Activated T-helper 2 cell treated with anti-CD3 and anti-CD28 coated beads, Interferon-gamma antibody, Interleukin-2, Interleukin-4, amounts not matched to agents 10 μg/mL and 5 μg/mL and 100 μg/mL, durations not matched to agents 14 hours and 24 hours and 36 hours (primary cell): ENCODE measurements at regions of chr21 and their contacts with region 1.

Region 1: DNA sequence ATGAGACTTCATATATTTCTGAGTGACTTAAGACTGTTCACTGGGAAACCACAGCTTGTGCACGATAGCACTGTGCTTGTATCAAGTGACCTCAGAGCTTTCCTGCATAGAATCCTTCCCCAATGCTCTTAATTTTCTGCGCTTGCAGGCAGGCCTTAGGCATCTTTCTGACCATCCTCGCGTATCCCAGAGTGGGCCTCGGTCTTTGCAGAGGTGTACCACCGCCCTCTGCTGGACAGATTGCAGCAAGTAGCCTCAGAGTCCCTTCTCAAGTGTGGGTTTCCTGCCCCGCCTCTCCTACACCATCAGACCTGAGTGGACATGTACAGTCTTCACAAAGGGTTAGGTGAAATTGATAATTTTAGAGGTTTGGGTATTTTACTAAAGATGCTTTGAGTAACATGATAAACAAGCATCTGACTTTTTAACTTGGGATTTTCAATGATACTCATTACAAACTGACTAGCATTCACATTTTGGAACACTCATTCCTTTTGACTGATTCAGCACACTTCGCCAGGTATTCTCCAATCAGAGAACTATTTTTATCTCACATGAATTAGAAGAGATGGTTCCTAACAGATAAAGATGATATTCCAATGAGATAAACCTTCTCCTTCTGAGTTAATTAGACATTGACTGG is 246.5 kb upstream of the USP25 start:
- DNase-seq: peak; percentile 63
- H3K4me3 Mint-ChIP-seq: no peak overlapping the region
- H3K27ac Mint-ChIP-seq: no peak overlapping the region
- H3K4me1 Mint-ChIP-seq: peaks cover 13% of the 10 kb centered on the region
- H3K27me3 Mint-ChIP-seq: peaks cover 7% of the 10 kb centered on the region

Region 2: DNA sequence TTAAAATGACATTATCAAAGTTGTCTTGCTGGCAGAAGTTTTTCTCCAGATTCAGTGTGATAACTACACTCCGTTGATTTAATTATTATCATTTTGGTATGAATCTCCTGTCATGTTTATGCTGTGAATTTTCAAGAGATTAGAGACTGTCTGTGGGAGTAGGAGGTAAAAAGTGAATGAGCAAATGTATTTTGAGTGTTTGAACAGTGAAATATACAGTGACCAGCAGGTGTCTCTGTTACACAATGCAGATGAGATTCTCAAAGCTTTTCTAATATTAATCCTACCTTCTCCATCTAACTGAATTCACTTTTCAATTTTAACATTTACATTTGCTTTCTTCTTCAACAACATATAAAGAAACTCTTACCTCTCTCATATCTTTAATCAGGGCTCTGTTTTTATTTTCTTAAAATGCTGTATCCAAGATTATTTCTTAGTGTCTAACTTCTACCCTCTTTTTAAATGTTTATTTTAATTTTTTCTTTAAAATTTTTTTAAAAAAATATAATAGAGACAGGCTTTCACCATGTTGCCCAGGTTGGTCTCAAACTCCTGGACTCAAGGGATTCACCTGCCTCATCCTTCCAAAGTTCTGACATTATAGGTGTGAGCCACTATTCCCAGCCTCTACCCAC is 1079.5 kb before region 1 on chr21:
- intact Hi-C with region 1: loop called (anchors 5 kb)
- DNase-seq: no peak
- H3K4me3 Mint-ChIP-seq: no peak overlapping the region
- H3K27ac Mint-ChIP-seq: no peak overlapping the region
- H3K4me1 Mint-ChIP-seq: peaks cover 1% of the 10 kb centered on the region
- H3K27me3 Mint-ChIP-seq: peaks cover 4% of the 10 kb centered on the region

Region 3: GRCh38 chr21:14864211-14865021 is 618.8 kb before region 1 on chr21:
- intact Hi-C with region 1: loop called (anchors 1 kb)
- DNase-seq: peak; percentile 19
- H3K4me3 Mint-ChIP-seq: no peak overlapping the region
- H3K27ac Mint-ChIP-seq: no peak overlapping the region
- H3K4me1 Mint-ChIP-seq: peaks cover 6% of the 10 kb centered on the region
- H3K27me3 Mint-ChIP-seq: peaks cover 10% of the 10 kb centered on the region

Region 4: GRCh38 chr21:15592271-15592860 is 109.1 kb after region 1 on chr21:
- intact Hi-C with region 1: loop called (anchors 5 kb)
- DNase-seq: no peak
- H3K4me3 Mint-ChIP-seq: no peak overlapping the region
- H3K27ac Mint-ChIP-seq: no peak overlapping the region
- H3K4me1 Mint-ChIP-seq: no peaks in the 10 kb centered on the region
- H3K27me3 Mint-ChIP-seq: peaks cover 12% of the 10 kb centered on the region